ENCODE measurements at regions of chr10 and their contacts with region 1.

Region 1: DNA sequence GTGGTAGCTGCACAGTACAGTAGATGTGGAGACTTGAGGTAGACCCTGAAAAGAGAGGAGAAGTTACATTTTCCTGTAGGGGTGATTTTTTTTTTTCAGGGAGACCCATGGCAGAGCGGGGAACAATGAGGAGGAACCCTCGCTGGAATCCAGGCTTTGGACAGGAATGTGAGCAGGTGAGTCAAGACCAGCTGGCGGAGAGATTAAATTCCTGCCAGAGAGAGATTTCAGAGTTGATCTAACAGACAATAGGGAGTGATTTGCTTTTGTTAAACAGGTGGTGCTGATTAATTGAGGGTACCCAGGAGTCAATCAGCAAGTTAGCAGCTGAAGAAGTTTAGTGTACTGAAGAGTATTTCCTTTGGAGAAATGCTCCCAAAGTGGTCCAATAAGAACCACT is 41.6 kb upstream of the MINDY3 start:
- DNase-seq: no peak
- ATAC-seq: no peak
- H3K4me3 Mint-ChIP-seq: no peak overlapping the region
- H3K27ac Mint-ChIP-seq: no peak overlapping the region
- H3K4me1 Mint-ChIP-seq: no peaks in the 10 kb centered on the region
- H3K27me3 Mint-ChIP-seq: peaks cover 19% of the 10 kb centered on the region
- CTCF ChIP-seq: no peak

Region 2: GRCh38 chr10:15775513-15775912 is 126.4 kb before region 1 on chr10:
- CTCF ChIA-PET with region 1: no interaction called
- POLR2A ChIA-PET with region 1: no interaction called
- intact Hi-C with region 1: no loop called
- DNase-seq: no peak
- ATAC-seq: no peak
- H3K4me3 Mint-ChIP-seq: no peak overlapping the region
- H3K27ac Mint-ChIP-seq: no peak overlapping the region
- H3K4me1 Mint-ChIP-seq: no peaks in the 10 kb centered on the region
- H3K27me3 Mint-ChIP-seq: no peaks in the 10 kb centered on the region
- CTCF ChIP-seq: no peak

Region 3: DNA sequence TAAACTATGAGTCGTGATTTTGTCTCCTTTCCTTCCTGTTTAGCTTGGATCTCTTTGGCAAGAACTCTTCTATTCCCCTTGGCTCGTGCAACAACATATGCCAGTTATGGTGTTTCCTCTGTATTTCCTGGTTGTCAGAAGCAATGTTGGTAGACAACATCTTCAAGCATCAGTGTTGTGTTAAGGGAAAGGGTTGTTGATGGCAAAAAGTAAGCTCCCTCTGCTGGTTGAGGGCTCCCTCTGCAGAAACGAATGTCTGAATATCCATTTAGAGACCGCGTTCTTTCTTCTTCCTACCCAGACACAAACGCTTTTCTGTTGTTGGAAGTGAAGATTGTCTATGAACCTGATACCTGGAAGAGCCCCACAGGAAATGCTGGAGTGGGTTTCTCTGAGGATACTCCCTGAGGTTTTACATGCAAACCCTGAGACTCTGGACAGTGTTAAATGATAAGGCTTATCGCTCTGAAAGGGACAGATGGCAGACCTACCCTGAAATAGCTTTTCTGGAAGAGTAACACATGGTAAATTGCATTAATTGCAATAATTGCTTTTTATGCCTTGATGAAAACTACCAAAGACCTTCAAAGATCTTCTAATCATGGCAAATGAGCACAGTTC is 643.3 kb after region 1 on chr10:
- CTCF ChIA-PET with region 1: interaction called, 10 read pairs
- POLR2A ChIA-PET with region 1: no interaction called
- intact Hi-C with region 1: loop called (anchors 5 kb)
- DNase-seq: peak; percentile 21
- ATAC-seq: no peak
- H3K4me3 Mint-ChIP-seq: no peak overlapping the region
- H3K27ac Mint-ChIP-seq: no peak overlapping the region
- H3K4me1 Mint-ChIP-seq: no peaks in the 10 kb centered on the region
- H3K27me3 Mint-ChIP-seq: peaks cover 14% of the 10 kb centered on the region
- CTCF ChIP-seq: peak; percentile 54

Measured in activated CD8-positive, alpha-beta T cell treated with anti-CD3 and anti-CD28 coated beads for 36 hours (primary cell).